ENCODE measurements at regions of chr2 and their contacts with region 1.

Region 1: GRCh38 chr2:24228470-24228869 is 53.6 kb downstream of the FAM228A start:
- DNase-seq: no peak
- ATAC-seq: peak in 2 of 4 donors; percentile 40 to 56
- H3K4me3 ChIP-seq: no peak overlapping the region
- H3K27ac ChIP-seq: no peak overlapping the region
- H3K4me1 ChIP-seq: no peaks in the 10 kb centered on the region
- H3K27me3 ChIP-seq: no peaks in the 10 kb centered on the region
- CTCF ChIP-seq: peak; percentile 26

Region 2: DNA sequence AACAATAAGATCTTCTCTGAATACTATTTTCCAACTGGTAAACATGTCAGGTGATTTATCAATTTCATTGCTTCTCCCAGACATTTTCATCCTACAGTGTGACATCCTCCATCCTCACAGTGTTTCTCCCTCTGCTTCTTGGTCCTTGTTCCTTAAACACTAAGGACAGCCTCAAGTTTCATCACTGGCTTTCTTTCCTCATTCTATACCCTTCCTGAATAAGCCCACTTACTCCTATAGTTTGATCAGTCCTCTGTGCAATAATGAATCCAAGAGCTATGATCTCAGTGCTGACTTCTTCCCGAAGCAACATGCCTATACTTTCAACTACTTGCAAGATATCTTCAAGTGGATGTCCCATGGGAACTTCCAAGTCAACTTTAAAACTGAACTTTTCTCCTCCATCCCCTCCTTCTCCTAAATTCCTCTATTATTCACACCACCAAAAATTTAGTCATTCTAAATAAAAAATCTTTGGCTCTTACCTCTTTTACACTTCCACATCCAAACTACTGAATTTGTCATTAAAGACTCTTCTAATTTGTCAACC is 34.0 kb after region 1 on chr2:
- intact Hi-C with region 1: no loop called
- DNase-seq: no peak
- ATAC-seq: no peak
- H3K4me3 ChIP-seq: no peak overlapping the region
- H3K27ac ChIP-seq: no peak overlapping the region
- H3K4me1 ChIP-seq: no peaks in the 10 kb centered on the region
- H3K27me3 ChIP-seq: no peaks in the 10 kb centered on the region
- CTCF ChIP-seq: no peak

Region 3: DNA sequence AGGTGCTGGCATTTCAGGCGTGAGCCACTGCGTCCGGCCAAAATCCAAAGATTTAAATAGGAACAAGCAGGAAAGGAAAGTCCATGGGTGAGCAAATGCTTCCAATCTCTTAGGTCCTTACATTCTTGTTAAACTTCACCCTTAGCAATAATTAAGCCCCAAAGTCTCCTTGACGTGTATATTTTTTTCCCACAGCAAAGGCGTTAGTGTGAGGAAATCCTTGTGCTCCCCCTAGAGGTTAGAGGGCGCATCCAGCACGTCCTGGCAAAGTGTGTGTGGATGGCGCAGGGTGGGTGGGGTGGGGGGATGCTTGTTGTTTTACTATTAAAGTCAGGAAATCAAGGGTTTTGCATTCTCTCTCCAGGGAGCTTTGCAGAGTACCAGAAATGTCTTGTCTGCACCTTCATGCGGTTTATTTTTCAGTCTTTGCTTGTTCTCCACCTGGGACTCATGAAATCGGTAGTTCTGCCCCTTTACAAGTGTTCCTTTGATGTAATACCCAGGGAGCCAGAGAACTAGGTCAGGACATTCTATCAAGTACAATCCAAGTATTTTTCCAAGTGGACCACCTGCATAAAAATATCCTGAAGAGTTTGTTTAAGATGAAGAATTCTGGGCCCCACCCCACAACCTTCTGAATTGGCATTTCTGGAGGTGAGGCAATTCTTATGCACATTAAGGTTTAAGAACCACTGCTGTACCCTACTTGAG is 154.0 kb after region 1 on chr2:
- intact Hi-C with region 1: loop called (anchors 2 to 10 kb)
- DNase-seq: peak; percentile 45 to 67
- ATAC-seq: peak; percentile 81 to 96 (median 91)
- H3K4me3 ChIP-seq: no peak overlapping the region
- H3K27ac ChIP-seq: no peak overlapping the region
- H3K4me1 ChIP-seq: no peaks in the 10 kb centered on the region
- H3K27me3 ChIP-seq: no peaks in the 10 kb centered on the region
- CTCF ChIP-seq: peak; percentile 72